ENCODE measurements at regions of chr10 and their contacts with region 1.

Region 1: DNA sequence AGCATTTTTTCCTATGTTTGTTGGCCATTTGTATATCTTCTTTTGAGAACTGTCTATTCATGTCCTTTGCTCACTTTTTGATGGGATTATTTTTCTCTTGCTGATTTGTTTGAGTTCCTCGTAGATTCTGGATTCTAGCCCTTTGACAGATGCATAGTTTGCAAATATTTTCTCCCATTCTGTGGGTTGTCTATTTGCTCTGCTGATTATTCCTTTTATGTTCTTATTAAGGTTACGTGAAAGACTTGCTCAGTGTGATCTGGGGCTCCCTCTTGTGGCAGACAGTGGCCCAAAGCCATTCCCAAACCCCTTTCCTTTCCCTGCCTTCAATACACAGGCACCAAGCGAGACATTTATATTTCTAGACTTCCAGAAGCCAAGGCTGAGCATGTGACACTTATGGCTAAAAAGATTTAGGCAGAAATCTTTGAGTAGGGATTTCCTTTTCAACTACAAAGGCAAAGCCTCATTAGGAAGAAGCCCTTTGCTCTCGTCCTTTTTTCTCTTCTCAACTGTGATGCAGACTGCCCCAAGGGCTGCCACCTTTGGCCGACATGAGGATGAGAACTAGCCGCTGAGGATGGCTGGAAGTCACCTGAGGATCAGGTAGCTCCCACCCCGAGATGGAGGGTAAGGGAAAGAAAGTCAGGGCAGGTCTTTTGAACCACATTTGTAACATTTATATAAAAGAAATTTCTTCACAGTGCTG is 23.6 kb downstream of the ST8SIA6 start:
- DNase-seq: peak; percentile 69
- ATAC-seq: no peak
- H3K4me3 Mint-ChIP-seq: no peak overlapping the region
- H3K27ac Mint-ChIP-seq: no peak overlapping the region
- H3K4me1 Mint-ChIP-seq: peaks cover 55% of the 10 kb centered on the region
- H3K27me3 Mint-ChIP-seq: peaks cover 13% of the 10 kb centered on the region

Region 2: GRCh38 chr10:17409170-17409733 is 21.5 kb before region 1 on chr10:
- CTCF ChIA-PET with region 1: interaction called, 123 read pairs
- POLR2A ChIA-PET with region 1: no interaction called
- DNase-seq: peak; percentile 24
- ATAC-seq: peak; percentile 39
- H3K4me3 Mint-ChIP-seq: no peak overlapping the region
- H3K27ac Mint-ChIP-seq: no peak overlapping the region
- H3K4me1 Mint-ChIP-seq: peaks cover 8% of the 10 kb centered on the region
- H3K27me3 Mint-ChIP-seq: peaks cover 7% of the 10 kb centered on the region

Region 3: GRCh38 chr10:17443707-17444387 is 13.0 kb after region 1 on chr10:
- CTCF ChIA-PET with region 1: interaction called, 15 read pairs
- POLR2A ChIA-PET with region 1: no interaction called
- DNase-seq: no peak
- ATAC-seq: peak; percentile 58
- H3K4me3 Mint-ChIP-seq: no peak overlapping the region
- H3K27ac Mint-ChIP-seq: no peak overlapping the region
- H3K4me1 Mint-ChIP-seq: peaks cover 8% of the 10 kb centered on the region
- H3K27me3 Mint-ChIP-seq: peaks cover 33% of the 10 kb centered on the region

Region 4: GRCh38 chr10:17474595-17475323 is 44.0 kb after region 1 on chr10:
- CTCF ChIA-PET with region 1: no interaction called
- POLR2A ChIA-PET with region 1: no interaction called
- DNase-seq: no peak
- ATAC-seq: no peak
- H3K4me3 Mint-ChIP-seq: no peak overlapping the region
- H3K27ac Mint-ChIP-seq: no peak overlapping the region
- H3K4me1 Mint-ChIP-seq: no peaks in the 10 kb centered on the region
- H3K27me3 Mint-ChIP-seq: peaks cover 34% of the 10 kb centered on the region

Region 5: GRCh38 chr10:17488848-17489247 is 58.0 kb after region 1 on chr10:
- CTCF ChIA-PET with region 1: no interaction called
- POLR2A ChIA-PET with region 1: no interaction called
- DNase-seq: no peak
- ATAC-seq: no peak
- H3K4me3 Mint-ChIP-seq: no peak overlapping the region
- H3K27ac Mint-ChIP-seq: no peak overlapping the region
- H3K4me1 Mint-ChIP-seq: no peaks in the 10 kb centered on the region
- H3K27me3 Mint-ChIP-seq: no peaks in the 10 kb centered on the region

Measured in activated CD8-positive, alpha-beta T cell treated with anti-CD3 and anti-CD28 coated beads, Interleukin-2, amount 10 ng/mL, durations not matched to agents 7 days and 5 days (primary cell).